ENCODE measurements at regions of chr3 and their contacts with region 1.

Region 1: DNA sequence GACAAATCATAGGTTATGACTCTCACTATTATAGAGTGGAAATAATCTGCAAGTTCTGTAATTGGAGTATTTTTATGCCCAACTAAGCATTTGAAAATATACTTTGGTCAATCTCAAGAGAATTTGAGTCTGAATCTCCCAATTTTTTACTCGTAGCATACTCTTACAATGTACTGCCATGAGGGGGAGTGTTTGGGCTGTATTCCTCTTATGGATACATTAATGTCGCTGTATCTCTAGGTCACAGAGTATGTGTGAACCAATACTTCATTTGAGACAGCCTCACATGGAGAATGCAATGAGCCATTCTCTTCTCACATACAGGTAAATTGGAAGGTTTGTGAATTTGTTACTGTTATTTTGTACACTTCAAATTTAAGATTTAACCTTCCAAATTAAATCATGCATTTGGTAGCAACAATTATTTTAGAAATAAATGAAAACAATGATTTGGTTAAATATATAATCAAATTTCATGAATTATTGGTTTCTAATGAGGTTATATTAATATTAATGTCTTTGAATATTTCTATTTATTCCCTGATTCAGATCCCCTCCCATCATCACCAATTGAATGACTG is 5.5 kb upstream of the CD200 start:
- DNase-seq: peak; percentile 21
- H3K4me3 ChIP-seq: no peak overlapping the region
- H3K27ac ChIP-seq: no peak overlapping the region
- H3K27me3 ChIP-seq: peaks cover 5% of the 10 kb centered on the region
- CTCF ChIP-seq: peak; percentile 82

Region 2: DNA sequence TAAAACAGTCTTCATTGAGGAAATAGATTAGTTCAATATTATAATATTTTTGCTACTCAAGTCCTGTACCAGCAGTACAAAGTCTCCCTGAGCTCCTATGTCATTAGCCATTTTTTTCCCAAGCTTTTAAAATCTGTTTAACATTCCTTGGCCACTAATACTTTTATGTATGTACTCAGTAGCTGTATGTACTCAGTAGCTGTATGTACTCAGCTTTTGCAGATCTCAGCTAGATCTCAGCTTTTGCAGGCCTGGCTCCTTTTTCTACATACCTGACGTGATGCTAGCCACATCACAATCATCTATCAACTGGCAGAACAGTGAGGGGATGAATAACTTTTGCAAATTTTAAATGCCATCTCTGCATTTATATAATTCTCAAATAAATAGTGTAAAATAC is 47.2 kb before region 1 on chr3:
- CTCF ChIA-PET with region 1: no interaction called
- POLR2A ChIA-PET with region 1: no interaction called
- DNase-seq: no peak
- H3K4me3 ChIP-seq: no peak overlapping the region
- H3K27ac ChIP-seq: no peak overlapping the region
- H3K27me3 ChIP-seq: no peaks in the 10 kb centered on the region
- CTCF ChIP-seq: no peak

Region 3: GRCh38 chr3:112519424-112520001 is 192.1 kb after region 1 on chr3:
- CTCF ChIA-PET with region 1: interaction called, 21 read pairs
- POLR2A ChIA-PET with region 1: no interaction called
- DNase-seq: peak; percentile 50
- H3K4me3 ChIP-seq: no peak overlapping the region
- H3K27ac ChIP-seq: no peak overlapping the region
- H3K27me3 ChIP-seq: no peaks in the 10 kb centered on the region
- CTCF ChIP-seq: peak; percentile 81

Measured in AG04450 (cell line).